Activated CD4-positive, alpha-beta T cell treated with anti-CD3 and anti-CD28 coated beads, Interleukin-2, amount 10 ng/mL, durations not matched to agents 24 days and 14 days (primary cell): ENCODE measurements at regions of chr6 and their contacts with region 1.

Region 1: GRCh38 chr6:27280064-27280539 is 32.0 kb downstream of the POM121L2 start:
- DNase-seq: peak; percentile 69
- H3K4me3 Mint-ChIP-seq: peak overlapping the region; percentile 57
- H3K27ac Mint-ChIP-seq: no peak overlapping the region
- H3K4me1 Mint-ChIP-seq: peaks cover 11% of the 10 kb centered on the region
- H3K27me3 Mint-ChIP-seq: peaks cover 61% of the 10 kb centered on the region

Region 2: DNA sequence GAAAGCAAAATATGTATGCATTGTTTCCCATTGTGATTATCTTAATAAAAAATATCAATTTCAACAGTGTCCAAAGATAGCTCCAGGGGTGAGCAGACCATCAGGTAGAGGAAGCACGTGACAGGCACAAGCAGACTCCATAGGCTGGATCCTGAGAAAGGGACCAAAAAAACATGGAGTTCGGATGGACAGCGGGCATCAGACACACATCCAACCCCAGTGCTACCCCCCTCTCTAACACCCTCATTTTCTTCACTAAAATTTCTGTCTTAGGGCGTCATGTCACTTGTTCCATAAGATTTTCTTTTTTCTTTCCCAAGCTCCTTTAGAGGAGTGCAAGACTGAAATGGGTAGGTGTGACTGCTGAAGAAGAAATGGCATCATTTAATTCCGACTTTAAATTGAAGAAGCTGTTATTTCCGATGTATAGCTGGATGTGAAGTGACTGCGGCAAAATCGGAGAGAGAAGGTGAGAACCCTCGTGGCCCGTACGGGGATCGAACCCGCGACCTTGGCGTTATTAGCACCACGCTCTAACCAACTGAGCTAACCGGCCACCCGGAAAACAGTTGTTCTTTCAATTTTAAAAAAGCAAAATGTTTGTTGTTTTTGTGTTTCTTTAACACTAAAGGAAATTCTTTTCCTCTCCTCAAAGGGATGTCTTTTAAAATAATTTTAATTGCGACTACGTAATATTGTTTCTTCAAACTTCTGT is 42.9 kb before region 1 on chr6:
- intact Hi-C with region 1: loop called (anchors 5 kb)
- DNase-seq: peak; percentile 76
- H3K4me3 Mint-ChIP-seq: peak overlapping the region; percentile 71
- H3K27ac Mint-ChIP-seq: peak overlapping the region; percentile 65
- H3K4me1 Mint-ChIP-seq: peaks cover 20% of the 10 kb centered on the region
- H3K27me3 Mint-ChIP-seq: peaks cover 54% of the 10 kb centered on the region

Region 3: GRCh38 chr6:27260369-27260768 is 19.7 kb before region 1 on chr6:
- intact Hi-C with region 1: no loop called
- DNase-seq: no peak
- H3K4me3 Mint-ChIP-seq: no peak overlapping the region
- H3K27ac Mint-ChIP-seq: no peak overlapping the region
- H3K4me1 Mint-ChIP-seq: no peaks in the 10 kb centered on the region
- H3K27me3 Mint-ChIP-seq: peaks cover 40% of the 10 kb centered on the region

Region 4: DNA sequence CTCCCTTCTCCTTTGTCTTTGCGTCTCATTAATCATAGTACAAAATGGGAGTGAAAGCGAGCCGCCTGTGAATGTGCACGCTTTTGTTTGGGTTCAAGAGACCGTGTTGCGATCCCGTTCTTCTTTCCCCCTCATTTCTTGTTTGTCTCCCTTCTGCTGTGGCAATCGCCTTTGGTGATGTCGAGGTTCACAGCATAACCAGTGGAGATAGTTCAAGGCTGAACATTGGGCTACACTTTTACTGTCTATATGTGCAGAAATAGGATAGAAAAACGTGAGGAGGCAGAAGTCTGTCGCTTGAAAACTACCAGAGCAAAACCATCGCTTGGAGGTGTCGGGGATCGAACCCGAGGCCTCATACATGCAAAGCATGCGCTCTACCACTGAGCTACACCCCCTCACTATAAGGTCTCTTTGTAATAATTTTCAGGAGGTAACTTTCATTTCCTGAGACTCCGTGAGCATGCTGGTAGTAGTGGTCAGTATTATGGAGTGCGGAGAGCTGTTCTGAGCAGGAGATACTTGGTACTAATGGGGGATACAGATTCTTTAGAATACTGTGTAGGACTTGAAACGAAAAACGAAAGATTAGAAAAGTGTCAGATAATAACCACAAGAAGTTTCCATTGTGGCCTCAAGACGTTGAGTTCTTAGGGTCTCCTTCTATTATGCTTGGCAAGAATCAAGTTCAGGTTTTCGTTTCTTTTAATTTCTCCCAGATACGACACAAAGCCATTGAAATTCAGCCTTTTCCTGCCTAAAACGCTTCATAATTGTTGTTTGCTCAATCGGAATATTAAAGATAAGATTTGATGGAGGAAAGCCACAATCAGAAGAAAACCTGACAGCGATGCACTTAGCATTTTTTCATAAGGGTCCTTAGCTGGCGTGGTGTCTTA is 1537.1 kb after region 1 on chr6:
- intact Hi-C with region 1: loop called (anchors 10 kb)
- DNase-seq: peak; percentile 61
- H3K4me3 Mint-ChIP-seq: no peak overlapping the region
- H3K27ac Mint-ChIP-seq: no peak overlapping the region
- H3K4me1 Mint-ChIP-seq: peaks cover 7% of the 10 kb centered on the region
- H3K27me3 Mint-ChIP-seq: peaks cover 71% of the 10 kb centered on the region